Activated CD4-positive, alpha-beta T cell treated with anti-CD3 and anti-CD28 coated beads for 36 hours (primary cell): ENCODE measurements at regions of chr18 and their contacts with region 1.

Region 1: GRCh38 chr18:77207540-77207939 is 42.1 kb upstream of the GALR1 start:
- DNase-seq: peak; percentile 69
- ATAC-seq: peak; percentile 84
- H3K4me3 Mint-ChIP-seq: no peak overlapping the region
- H3K27ac Mint-ChIP-seq: peak overlapping the region; percentile 73
- H3K4me1 Mint-ChIP-seq: peaks cover 44% of the 10 kb centered on the region
- H3K27me3 Mint-ChIP-seq: no peaks in the 10 kb centered on the region

Region 2: GRCh38 chr18:76922107-76922506 is 285.4 kb before region 1 on chr18:
- CTCF ChIA-PET with region 1: no interaction called
- POLR2A ChIA-PET with region 1: no interaction called
- intact Hi-C with region 1: loop called in 1 of 2 experiments (anchors 5 kb)
- DNase-seq: peak; percentile 71
- ATAC-seq: peak; percentile 97
- H3K4me3 Mint-ChIP-seq: no peak overlapping the region
- H3K27ac Mint-ChIP-seq: no peak overlapping the region
- H3K4me1 Mint-ChIP-seq: peaks cover 15% of the 10 kb centered on the region
- H3K27me3 Mint-ChIP-seq: no peaks in the 10 kb centered on the region

Region 3: DNA sequence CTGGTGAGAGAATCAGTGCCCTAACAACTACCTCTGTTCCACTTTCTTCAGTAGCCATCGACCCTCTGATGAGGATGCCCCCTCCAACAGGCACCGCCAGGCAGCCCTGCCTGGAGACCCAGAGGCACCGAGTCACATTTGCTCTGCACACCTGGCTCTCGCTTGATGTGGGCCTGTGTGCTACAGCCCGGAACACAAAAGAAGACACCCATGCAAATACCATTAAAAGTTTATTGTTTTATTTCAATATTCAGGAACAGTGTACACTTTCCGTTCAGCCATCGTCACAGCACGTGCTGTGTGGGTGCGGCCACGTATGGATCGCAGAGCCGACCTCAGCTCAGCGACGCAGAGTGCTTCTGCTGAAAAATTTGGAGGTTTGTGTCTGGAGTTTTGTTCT is 228.9 kb before region 1 on chr18:
- CTCF ChIA-PET with region 1: no interaction called
- POLR2A ChIA-PET with region 1: no interaction called
- intact Hi-C with region 1: no loop called
- DNase-seq: no peak
- ATAC-seq: no peak
- H3K4me3 Mint-ChIP-seq: no peak overlapping the region
- H3K27ac Mint-ChIP-seq: no peak overlapping the region
- H3K4me1 Mint-ChIP-seq: no peaks in the 10 kb centered on the region
- H3K27me3 Mint-ChIP-seq: no peaks in the 10 kb centered on the region

Region 4: DNA sequence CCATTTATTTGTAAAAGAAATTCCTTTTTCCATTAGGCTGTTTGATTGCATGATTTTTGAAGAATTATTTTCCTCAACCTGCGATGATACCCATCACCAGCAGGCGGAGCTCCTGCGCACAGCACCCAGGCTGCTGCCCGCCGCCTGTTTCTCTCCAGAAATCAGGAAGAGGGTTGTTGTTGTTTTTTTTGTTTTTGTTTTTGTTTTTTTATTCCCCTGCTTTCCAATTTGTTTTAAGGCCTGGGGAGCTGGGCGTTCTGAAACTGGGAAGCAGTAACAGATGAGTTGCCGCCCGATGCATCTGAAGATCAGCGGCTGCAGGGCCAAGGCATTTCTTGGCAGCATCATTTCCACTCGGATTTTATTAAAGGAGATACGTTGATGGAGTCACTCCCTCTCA is 207.0 kb before region 1 on chr18:
- CTCF ChIA-PET with region 1: interaction called, 49 read pairs
- POLR2A ChIA-PET with region 1: interaction called, 3 read pairs
- intact Hi-C with region 1: loop called (anchors 1 kb)
- DNase-seq: peak; percentile 70
- ATAC-seq: no peak
- H3K4me3 Mint-ChIP-seq: no peak overlapping the region
- H3K27ac Mint-ChIP-seq: peak overlapping the region; percentile 17
- H3K4me1 Mint-ChIP-seq: peaks cover 21% of the 10 kb centered on the region
- H3K27me3 Mint-ChIP-seq: no peaks in the 10 kb centered on the region

Region 5: GRCh38 chr18:77061946-77062517 is 145.5 kb before region 1 on chr18:
- CTCF ChIA-PET with region 1: interaction called, 3 read pairs
- POLR2A ChIA-PET with region 1: interaction called, 3 read pairs
- intact Hi-C with region 1: loop called in 1 of 2 experiments (anchors 2 kb)
- DNase-seq: peak; percentile 42
- ATAC-seq: peak; percentile 17
- H3K4me3 Mint-ChIP-seq: peak overlapping the region; percentile 47
- H3K27ac Mint-ChIP-seq: peak overlapping the region; percentile 98
- H3K4me1 Mint-ChIP-seq: peaks cover 83% of the 10 kb centered on the region
- H3K27me3 Mint-ChIP-seq: no peaks in the 10 kb centered on the region

Region 6: DNA sequence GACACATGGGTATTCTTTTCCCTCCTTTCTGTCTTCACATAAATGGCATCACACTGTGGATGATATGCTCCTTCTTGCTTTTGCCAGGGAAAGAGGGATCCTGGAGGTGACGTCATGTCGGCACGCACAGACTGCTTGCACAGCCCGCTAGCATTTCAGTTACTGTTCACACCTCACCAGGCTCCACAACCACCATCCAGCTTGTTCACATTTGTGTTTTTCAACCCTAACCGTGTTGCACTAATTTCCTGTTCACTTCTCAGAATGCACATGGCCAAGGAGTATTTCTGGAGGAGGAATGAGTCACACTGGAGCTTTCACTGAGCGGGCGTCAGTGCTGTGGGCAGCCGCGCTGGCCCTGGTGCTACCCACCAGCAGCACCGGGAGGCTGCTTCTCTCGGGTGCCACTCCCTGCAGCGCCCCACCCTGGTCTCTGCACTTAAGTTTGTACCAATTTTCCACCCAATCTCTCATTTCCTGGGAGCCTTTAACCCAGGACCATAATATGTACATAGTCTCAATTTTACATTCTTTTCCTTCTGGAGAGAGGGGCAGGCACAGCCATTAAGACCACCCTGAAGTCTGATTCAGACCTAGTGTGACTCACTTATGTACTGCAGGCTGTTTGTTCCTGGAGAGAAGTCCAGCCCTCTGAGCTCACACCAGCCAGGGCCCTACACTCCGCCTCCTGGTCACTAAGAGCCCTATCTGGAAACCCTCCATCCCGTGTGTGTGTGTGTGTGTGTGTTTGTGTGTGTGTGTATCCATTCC is 140.1 kb before region 1 on chr18:
- CTCF ChIA-PET with region 1: interaction called, 3 read pairs
- POLR2A ChIA-PET with region 1: interaction called, 3 read pairs
- intact Hi-C with region 1: loop called (anchors 2 kb)
- DNase-seq: peak; percentile 85
- ATAC-seq: peak; percentile 50
- H3K4me3 Mint-ChIP-seq: peak overlapping the region; percentile 48
- H3K27ac Mint-ChIP-seq: peak overlapping the region; percentile 94
- H3K4me1 Mint-ChIP-seq: peaks cover 100% of the 10 kb centered on the region
- H3K27me3 Mint-ChIP-seq: no peaks in the 10 kb centered on the region

Region 7: GRCh38 chr18:77132371-77133050 is 75.0 kb before region 1 on chr18 and contains the start of gene MBP:
- CTCF ChIA-PET with region 1: interaction called, 9 read pairs
- POLR2A ChIA-PET with region 1: interaction called, 3 read pairs
- intact Hi-C with region 1: loop called (anchors 1 to 2 kb)
- DNase-seq: peak; percentile 83
- ATAC-seq: peak; percentile 59
- H3K4me3 Mint-ChIP-seq: peak within 1 kb of the TSS; percentile 99
- H3K27ac Mint-ChIP-seq: peak within 1 kb of the TSS; percentile 98
- H3K4me1 Mint-ChIP-seq: peaks cover 52% of the 10 kb centered on the region
- H3K27me3 Mint-ChIP-seq: no peaks in the 10 kb centered on the region
- total RNA-seq, gene MBP: 47.0 to 65.7 TPM

Region 8: DNA sequence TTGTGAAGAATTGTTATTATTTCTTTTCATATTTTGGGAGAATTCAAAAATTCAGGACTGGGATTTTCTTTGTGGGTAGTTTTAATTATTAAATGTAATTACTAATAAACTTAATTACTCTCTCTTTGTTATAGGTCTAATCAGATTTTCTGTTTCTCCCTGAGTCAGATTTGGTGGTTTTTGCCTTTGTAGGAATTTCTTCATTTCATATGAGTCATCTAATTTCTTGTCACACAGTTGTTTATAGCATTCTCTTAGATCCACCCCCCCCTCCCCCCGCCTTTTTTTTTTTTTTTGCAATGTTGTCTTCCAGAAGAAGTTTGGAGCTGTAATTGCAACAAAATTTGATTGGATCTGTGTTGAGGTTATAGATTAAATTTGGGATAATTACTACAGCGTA is 16.1 kb after region 1 on chr18:
- CTCF ChIA-PET with region 1: interaction called, 5 read pairs
- POLR2A ChIA-PET with region 1: no interaction called
- intact Hi-C with region 1: loop called (anchors 1 to 2 kb)
- DNase-seq: no peak
- ATAC-seq: peak; percentile 70
- H3K4me3 Mint-ChIP-seq: no peak overlapping the region
- H3K27ac Mint-ChIP-seq: no peak overlapping the region
- H3K4me1 Mint-ChIP-seq: peaks cover 15% of the 10 kb centered on the region
- H3K27me3 Mint-ChIP-seq: peaks cover 12% of the 10 kb centered on the region